Endothelial cell of umbilical vein (primary cell): ENCODE measurements at regions of chr10 and their contacts with region 1.

Region 1: GRCh38 chr10:124975977-124976514 is 34.1 kb downstream of the ZRANB1 start:
- DNase-seq: peak; percentile 64
- H3K4me3 ChIP-seq: no peak overlapping the region
- H3K27ac ChIP-seq: peak overlapping the region; percentile 56
- H3K4me1 ChIP-seq: peaks cover 16% of the 10 kb centered on the region
- H3K27me3 ChIP-seq: no peaks in the 10 kb centered on the region
- CTCF ChIP-seq: no peak
- POLR2A ChIP-seq: no peak

Region 2: GRCh38 chr10:124145109-124145870 is 830.8 kb before region 1 on chr10:
- CTCF ChIA-PET with region 1: no interaction called
- POLR2A ChIA-PET with region 1: no interaction called
- dilution Hi-C with region 1: no loop called
- intact Hi-C with region 1: no loop called
- DNase-seq: no peak
- H3K4me3 ChIP-seq: no peak overlapping the region
- H3K27ac ChIP-seq: no peak overlapping the region
- H3K4me1 ChIP-seq: no peaks in the 10 kb centered on the region
- H3K27me3 ChIP-seq: no peaks in the 10 kb centered on the region
- CTCF ChIP-seq: no peak
- POLR2A ChIP-seq: no peak

Region 3: DNA sequence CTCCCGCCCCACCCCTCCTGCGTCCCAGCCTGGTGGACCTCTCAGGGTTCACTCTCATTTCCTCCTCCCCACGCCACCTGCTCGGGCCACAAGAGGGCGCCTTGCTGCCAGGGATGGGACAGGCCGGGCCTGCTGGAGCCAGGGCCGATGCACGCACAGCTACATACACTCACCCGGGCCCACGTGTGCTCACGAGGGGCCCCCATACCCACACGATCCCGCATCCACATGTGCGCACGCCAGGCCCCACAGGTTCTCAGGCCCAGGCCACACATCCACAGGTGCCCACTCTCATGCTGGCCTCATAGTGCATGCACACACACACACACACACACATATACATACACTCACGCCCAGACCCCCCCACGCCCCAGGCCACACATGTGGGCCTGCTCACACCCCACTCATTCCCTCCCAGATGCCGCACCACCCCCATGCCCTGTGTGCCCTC is 445.8 kb before region 1 on chr10:
- CTCF ChIA-PET with region 1: no interaction called
- POLR2A ChIA-PET with region 1: no interaction called
- dilution Hi-C with region 1: no loop called
- intact Hi-C with region 1: loop called (anchors 5 kb)
- DNase-seq: peak; percentile 66
- H3K4me3 ChIP-seq: no peak overlapping the region
- H3K27ac ChIP-seq: no peak overlapping the region
- H3K4me1 ChIP-seq: no peaks in the 10 kb centered on the region
- H3K27me3 ChIP-seq: no peaks in the 10 kb centered on the region
- CTCF ChIP-seq: peak; percentile 84 to 96
- POLR2A ChIP-seq: no peak

Region 4: GRCh38 chr10:124791378-124792348 is 184.4 kb before region 1 on chr10 and contains the start of gene EEF1AKMT2:
- CTCF ChIA-PET with region 1: no interaction called
- POLR2A ChIA-PET with region 1: no interaction called
- dilution Hi-C with region 1: no loop called
- intact Hi-C with region 1: loop called (anchors 5 kb)
- DNase-seq: peak; percentile 87
- H3K4me3 ChIP-seq: peak within 1 kb of the TSS; percentile 67 to 78 (median 72)
- H3K27ac ChIP-seq: peak within 1 kb of the TSS; percentile 60
- H3K4me1 ChIP-seq: peaks cover 2% of the 10 kb centered on the region
- H3K27me3 ChIP-seq: peaks cover 0 to 1% of the 10 kb centered on the region in 2 experiments
- CTCF ChIP-seq: no peak
- POLR2A ChIP-seq: peak; percentile 86
- total RNA-seq, gene EEF1AKMT2: 17.1 and 21.3 TPM in 2 replicates

Region 5: GRCh38 chr10:124909563-124909962 is 66.5 kb before region 1 on chr10:
- CTCF ChIA-PET with region 1: no interaction called
- POLR2A ChIA-PET with region 1: no interaction called
- dilution Hi-C with region 1: no loop called
- intact Hi-C with region 1: no loop called
- DNase-seq: no peak
- H3K4me3 ChIP-seq: no peak overlapping the region
- H3K27ac ChIP-seq: no peak overlapping the region
- H3K4me1 ChIP-seq: no peaks in the 10 kb centered on the region
- H3K27me3 ChIP-seq: no peaks in the 10 kb centered on the region
- CTCF ChIP-seq: no peak
- POLR2A ChIP-seq: no peak

Region 6: GRCh38 chr10:124923684-124924083 is 52.4 kb before region 1 on chr10:
- CTCF ChIA-PET with region 1: no interaction called
- POLR2A ChIA-PET with region 1: no interaction called
- dilution Hi-C with region 1: no loop called
- intact Hi-C with region 1: loop called (anchors 2 kb)
- DNase-seq: no peak
- H3K4me3 ChIP-seq: no peak overlapping the region
- H3K27ac ChIP-seq: peak overlapping the region; percentile 76
- H3K4me1 ChIP-seq: peaks cover 22% of the 10 kb centered on the region
- H3K27me3 ChIP-seq: no peaks in the 10 kb centered on the region
- CTCF ChIP-seq: no peak
- POLR2A ChIP-seq: no peak

Region 7: GRCh38 chr10:125118011-125118611 is 142.1 kb after region 1 on chr10:
- CTCF ChIA-PET with region 1: no interaction called
- POLR2A ChIA-PET with region 1: no interaction called
- dilution Hi-C with region 1: no loop called
- intact Hi-C with region 1: no loop called
- DNase-seq: peak; percentile 57
- H3K4me3 ChIP-seq: no peak overlapping the region
- H3K27ac ChIP-seq: no peak overlapping the region
- H3K4me1 ChIP-seq: no peaks in the 10 kb centered on the region
- H3K27me3 ChIP-seq: no peaks in the 10 kb centered on the region
- CTCF ChIP-seq: no peak
- POLR2A ChIP-seq: no peak